Activated T-helper 2 cell treated with anti-CD3 and anti-CD28 coated beads, Interferon-gamma antibody, Interleukin-2, Interleukin-4, amounts not matched to agents 10 μg/mL and 5 μg/mL and 100 μg/mL, durations not matched to agents 14 hours and 24 hours and 36 hours (primary cell): ENCODE measurements at regions of chr19 and their contacts with region 1.

Region 1: DNA sequence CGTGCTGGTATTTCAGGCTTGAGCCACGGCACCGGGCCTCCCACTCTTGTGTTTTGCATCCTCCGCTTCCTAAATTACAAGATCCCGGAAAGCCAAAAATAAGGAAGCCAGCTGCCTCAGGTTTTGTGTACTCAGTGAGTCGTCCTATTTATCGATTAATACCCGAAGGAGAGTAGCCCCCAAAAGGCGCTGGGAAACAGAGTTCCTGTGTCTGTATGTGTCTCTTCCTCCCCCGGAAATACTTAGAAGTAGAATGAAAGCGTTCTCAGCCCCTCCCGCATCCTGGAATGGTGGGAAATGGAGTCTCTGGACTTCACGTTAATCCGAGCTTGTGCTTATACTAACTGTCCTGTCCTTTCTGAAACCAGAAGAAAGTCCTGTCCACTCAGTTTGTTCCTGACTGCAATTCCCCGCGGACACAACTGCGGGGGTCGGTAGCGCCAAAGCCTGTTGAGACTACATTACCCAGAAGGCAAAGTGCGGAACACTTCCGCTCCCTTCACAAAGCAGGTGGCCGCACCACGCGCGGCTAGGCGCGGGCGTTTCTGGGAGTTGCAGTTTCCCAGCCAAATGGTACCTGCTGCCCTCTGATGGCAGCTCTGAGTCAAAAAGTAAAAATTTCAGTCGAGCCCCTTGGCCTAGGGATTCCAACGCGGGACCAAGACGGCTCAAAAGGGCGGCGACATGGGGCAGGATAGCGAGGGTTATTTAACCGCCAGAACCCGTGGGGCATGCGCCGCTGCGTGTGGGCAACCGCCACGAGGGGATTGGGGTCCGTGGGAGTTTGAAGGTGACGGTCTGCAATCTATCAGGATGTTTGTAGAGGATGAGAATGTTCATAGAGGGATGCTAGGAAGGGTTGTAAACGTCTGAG is 2.2 kb upstream of the GSK3A start:
- DNase-seq: peak; percentile 92
- H3K4me3 Mint-ChIP-seq: peak overlapping the region; percentile 88
- H3K27ac Mint-ChIP-seq: peak overlapping the region; percentile 89
- H3K4me1 Mint-ChIP-seq: peaks cover 32% of the 10 kb centered on the region
- H3K27me3 Mint-ChIP-seq: no peaks in the 10 kb centered on the region

Region 2: GRCh38 chr19:41967054-41967783 is 277.4 kb before region 1 on chr19:
- intact Hi-C with region 1: no loop called
- DNase-seq: no peak
- H3K4me3 Mint-ChIP-seq: no peak overlapping the region
- H3K27ac Mint-ChIP-seq: no peak overlapping the region
- H3K4me1 Mint-ChIP-seq: no peaks in the 10 kb centered on the region
- H3K27me3 Mint-ChIP-seq: peaks cover 2% of the 10 kb centered on the region

Region 3: GRCh38 chr19:42219812-42220750 is 24.5 kb before region 1 on chr19 and contains the start of gene ZNF526:
- intact Hi-C with region 1: loop called (anchors 1 kb)
- DNase-seq: peak; percentile 98
- H3K4me3 Mint-ChIP-seq: peak within 1 kb of the TSS; percentile 99
- H3K27ac Mint-ChIP-seq: peak within 1 kb of the TSS; percentile 95
- H3K4me1 Mint-ChIP-seq: peaks cover 33% of the 10 kb centered on the region
- H3K27me3 Mint-ChIP-seq: no peaks in the 10 kb centered on the region
- total RNA-seq, gene ZNF526: 17.3 and 18.4 TPM in 2 replicates

Region 4: DNA sequence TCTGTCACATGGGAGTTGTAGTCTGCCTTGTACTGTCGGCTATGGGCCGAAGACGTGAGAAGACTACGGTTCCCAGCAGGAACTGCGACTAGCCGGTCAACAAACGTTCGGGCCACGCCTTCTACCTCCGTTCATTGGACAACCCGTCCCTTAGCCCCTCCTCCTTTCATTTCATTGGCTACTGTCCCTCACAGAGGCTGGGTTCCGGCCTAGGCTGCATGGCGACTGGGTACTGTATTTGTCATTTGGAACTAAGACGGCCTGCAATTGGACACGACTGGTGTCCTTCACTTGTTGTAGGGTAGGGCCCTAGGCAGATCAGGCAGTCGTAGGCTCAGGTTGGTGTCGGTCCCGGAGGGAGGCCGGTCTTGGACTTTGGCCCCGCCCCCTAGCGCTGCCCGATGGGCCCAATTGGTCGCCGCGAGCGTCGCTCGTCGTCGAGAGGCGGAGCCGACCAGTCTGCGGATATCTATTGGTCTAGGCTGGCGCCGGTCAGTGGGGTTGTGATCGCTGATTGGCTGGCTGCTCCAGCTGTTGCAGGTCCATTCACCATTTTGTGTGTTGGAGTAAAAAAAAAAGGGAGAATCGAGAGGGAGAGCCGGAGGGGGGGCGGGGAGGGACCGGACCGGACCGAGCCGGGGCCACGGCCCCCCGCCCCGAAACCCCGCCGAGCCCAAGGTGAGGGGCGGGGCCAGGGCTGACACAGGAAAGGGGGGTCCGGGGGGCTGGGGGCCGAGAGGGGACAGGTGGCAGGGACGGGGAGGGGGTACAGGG is 24.3 kb after region 1 on chr19 and contains the start of gene CIC:
- intact Hi-C with region 1: loop called (anchors 1 kb)
- DNase-seq: peak; percentile 99
- H3K4me3 Mint-ChIP-seq: no peak within 1 kb of the TSS
- H3K27ac Mint-ChIP-seq: peak within 1 kb of the TSS; percentile 99
- H3K4me1 Mint-ChIP-seq: peaks cover 25% of the 10 kb centered on the region
- H3K27me3 Mint-ChIP-seq: no peaks in the 10 kb centered on the region
- total RNA-seq, gene CIC: 68.3 and 69.3 TPM in 2 replicates

Region 5: GRCh38 chr19:42290523-42291438 is 46.2 kb after region 1 on chr19:
- intact Hi-C with region 1: no loop called
- DNase-seq: no peak
- H3K4me3 Mint-ChIP-seq: no peak overlapping the region
- H3K27ac Mint-ChIP-seq: no peak overlapping the region
- H3K4me1 Mint-ChIP-seq: peaks cover 5% of the 10 kb centered on the region
- H3K27me3 Mint-ChIP-seq: no peaks in the 10 kb centered on the region

Region 6: GRCh38 chr19:42325273-42325895 is 80.8 kb after region 1 on chr19 and contains the start of gene MEGF8:
- intact Hi-C with region 1: loop called (anchors 1 kb)
- DNase-seq: peak; percentile 98
- H3K4me3 Mint-ChIP-seq: peak within 1 kb of the TSS; percentile 87
- H3K27ac Mint-ChIP-seq: peak within 1 kb of the TSS; percentile 73
- H3K4me1 Mint-ChIP-seq: peaks cover 12% of the 10 kb centered on the region
- H3K27me3 Mint-ChIP-seq: peaks cover 25% of the 10 kb centered on the region
- total RNA-seq, gene MEGF8: 9.7 and 10.3 TPM in 2 replicates